ENCODE measurements at regions of chr2 and their contacts with region 1.

Region 1: GRCh38 chr2:28958689-28959088 is 22.4 kb upstream of the TOGARAM2 start:
- DNase-seq: peak; percentile 47 to 74 (median 72)
- ATAC-seq: peak; percentile 82 to 93 (median 92)
- H3K4me3 ChIP-seq: no peak overlapping the region
- H3K27ac ChIP-seq: no peak overlapping the region
- H3K4me1 ChIP-seq: peaks cover 0 to 13% (median 3%) of the 10 kb centered on the region in 12 donors
- H3K27me3 ChIP-seq: no peaks in the 10 kb centered on the region
- CTCF ChIP-seq: peak; percentile 50 to 74 (median 64)
- POLR2A ChIP-seq: no peak

Region 2: GRCh38 chr2:28566521-28567041 is 392.1 kb before region 1 on chr2:
- intact Hi-C with region 1: loop called in 1 of 10 experiments (anchors 10 kb)
- DNase-seq: peak; percentile 85 to 94 (median 87)
- ATAC-seq: peak; percentile 85 to 96 (median 95)
- H3K4me3 ChIP-seq: peak overlapping the region; percentile 21 to 69 (median 61)
- H3K27ac ChIP-seq: peak overlapping the region in 11 of 12 donors; percentile 11 to 77 (median 47)
- H3K4me1 ChIP-seq: peaks cover 0 to 10% (median 0%) of the 10 kb centered on the region in 12 donors
- H3K27me3 ChIP-seq: no peaks in the 10 kb centered on the region
- CTCF ChIP-seq: peak; percentile 98 to 100 (median 99)
- POLR2A ChIP-seq: peak in 1 of 2 donors; percentile 26

Region 3: GRCh38 chr2:29014811-29015421 is 56.2 kb after region 1 on chr2:
- intact Hi-C with region 1: loop called in 5 of 10 experiments (anchors 1 to 5 kb)
- DNase-seq: peak; percentile 57 to 81 (median 75)
- ATAC-seq: peak; percentile 4 to 50 (median 14)
- H3K4me3 ChIP-seq: peak overlapping the region in 10 of 12 donors; percentile 3 to 47 (median 30)
- H3K27ac ChIP-seq: peak overlapping the region; percentile 79 to 98 (median 88)
- H3K4me1 ChIP-seq: peaks cover 6 to 83% (median 64%) of the 10 kb centered on the region in 12 donors
- H3K27me3 ChIP-seq: no peaks in the 10 kb centered on the region
- CTCF ChIP-seq: peak in 1 of 12 donors; percentile 7
- POLR2A ChIP-seq: no peak

Region 4: GRCh38 chr2:29196792-29197788 is 238.4 kb after region 1 on chr2:
- intact Hi-C with region 1: loop called (anchors 1 to 2 kb)
- DNase-seq: peak; percentile 46 to 75 (median 59)
- ATAC-seq: peak; percentile 67 to 88 (median 86)
- H3K4me3 ChIP-seq: no peak overlapping the region
- H3K27ac ChIP-seq: no peak overlapping the region
- H3K4me1 ChIP-seq: peaks cover 0 to 8% (median 0%) of the 10 kb centered on the region in 12 donors
- H3K27me3 ChIP-seq: no peaks in the 10 kb centered on the region
- CTCF ChIP-seq: peak; percentile 66 to 82 (median 76)
- POLR2A ChIP-seq: no peak

Region 5: DNA sequence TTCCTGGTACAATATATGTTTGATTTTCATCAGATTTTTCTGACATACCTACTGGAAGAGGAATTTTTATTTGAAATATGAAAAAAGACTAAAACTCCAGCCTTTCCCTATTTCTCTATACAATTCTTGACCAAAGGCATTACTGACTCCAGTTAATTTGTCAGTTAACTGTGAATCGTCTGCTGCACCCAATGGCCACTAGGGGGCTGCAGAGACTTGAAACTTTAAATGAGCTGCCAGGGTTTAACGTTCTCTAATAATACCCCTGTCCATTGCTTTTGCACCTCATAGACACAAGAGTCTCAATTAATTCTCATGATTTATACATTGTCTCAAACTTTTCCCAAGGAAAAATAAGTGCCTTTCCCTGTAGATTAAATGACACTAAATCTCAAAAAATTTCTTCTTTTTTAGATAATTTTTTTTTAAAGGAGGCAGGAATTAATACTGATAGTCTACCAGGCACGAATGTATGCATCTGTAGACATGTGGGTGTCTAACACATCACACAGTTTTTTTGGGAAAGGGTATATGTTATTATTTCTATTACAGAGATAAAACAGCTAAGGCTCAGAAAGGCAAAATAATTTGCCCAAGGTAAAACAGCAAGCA is 964.5 kb after region 1 on chr2:
- intact Hi-C with region 1: loop called in 1 of 10 experiments (anchors 5 kb)
- DNase-seq: peak in 4 of 5 donors; percentile 32 to 62 (median 46)
- ATAC-seq: no peak
- H3K4me3 ChIP-seq: no peak overlapping the region
- H3K27ac ChIP-seq: no peak overlapping the region
- H3K4me1 ChIP-seq: peaks cover 5 to 30% (median 22%) of the 10 kb centered on the region in 12 donors
- H3K27me3 ChIP-seq: peaks cover 0 to 67% (median 24%) of the 10 kb centered on the region in 9 donors
- CTCF ChIP-seq: peak; percentile 85 to 96 (median 92)
- POLR2A ChIP-seq: no peak

Region 6: DNA sequence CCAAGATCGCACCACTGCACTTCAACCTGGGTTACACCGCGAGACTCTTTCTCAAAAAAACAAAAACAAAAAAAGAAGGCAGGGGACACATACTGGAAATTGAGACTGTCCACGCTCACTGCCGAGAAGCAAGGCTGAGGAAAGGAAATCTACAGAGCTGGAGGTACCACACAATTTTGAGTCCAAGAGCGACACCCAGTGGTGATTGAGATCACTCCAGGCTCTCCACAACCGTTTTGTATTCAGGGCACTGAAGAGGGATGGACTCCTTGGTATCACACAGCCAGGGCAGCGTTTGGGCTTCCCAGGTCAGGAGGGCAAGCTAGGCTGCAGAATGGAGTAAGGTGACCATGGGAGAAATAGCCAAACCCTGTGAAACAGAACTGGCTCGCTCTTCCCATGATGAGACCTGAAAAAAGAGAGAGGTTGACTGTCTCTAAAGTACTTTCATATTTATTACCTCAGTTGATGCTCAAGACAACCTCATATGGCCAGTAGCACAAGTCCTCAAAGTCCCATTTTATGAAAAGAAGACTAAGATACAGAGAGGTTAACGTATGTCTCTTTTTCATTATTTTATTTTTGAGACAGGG is 1113.7 kb after region 1 on chr2:
- intact Hi-C with region 1: loop called in 4 of 10 experiments (anchors 5 kb)
- DNase-seq: peak in 4 of 5 donors; percentile 46 to 54 (median 50)
- ATAC-seq: peak in 3 of 4 donors; percentile 85 to 93 (median 88)
- H3K4me3 ChIP-seq: no peak overlapping the region
- H3K27ac ChIP-seq: no peak overlapping the region
- H3K4me1 ChIP-seq: peaks cover 0 to 4% (median 0%) of the 10 kb centered on the region in 12 donors
- H3K27me3 ChIP-seq: peaks cover 0 to 21% (median 5%) of the 10 kb centered on the region in 9 donors
- CTCF ChIP-seq: peak; percentile 39 to 74 (median 61)
- POLR2A ChIP-seq: no peak